PC-3 (cell line): ENCODE measurements at regions of chr10 and their contacts with region 1.

Region 1: DNA sequence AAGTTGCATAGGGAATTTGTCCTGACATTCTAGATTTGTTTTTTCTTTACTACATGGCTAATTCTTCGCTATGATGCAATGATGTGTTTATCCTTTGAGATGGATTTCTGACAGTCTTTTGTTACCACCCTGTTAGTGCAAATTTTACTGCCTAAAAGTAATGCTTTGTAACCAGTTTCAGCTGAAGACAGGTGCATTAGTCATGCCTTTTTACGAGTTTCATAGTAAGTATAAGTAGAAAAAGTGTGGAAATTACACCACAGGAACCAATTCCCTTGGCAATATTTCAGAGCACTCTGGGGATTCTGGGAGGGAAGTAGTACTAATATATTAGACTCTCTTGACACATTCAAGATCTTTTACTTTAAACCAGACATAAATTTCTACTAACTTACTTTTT is 257.8 kb upstream of the DKK1 start:
- DNase-seq: peak; percentile 98
- ATAC-seq: peak; percentile 82
- H3K4me3 ChIP-seq: no peak overlapping the region
- H3K27ac ChIP-seq: no peak overlapping the region
- H3K4me1 ChIP-seq: peaks cover 19% of the 10 kb centered on the region
- H3K27me3 ChIP-seq: no peaks in the 10 kb centered on the region
- CTCF ChIP-seq: no peak

Region 2: GRCh38 chr10:51574248-51575048 is 481.8 kb before region 1 on chr10:
- CTCF ChIA-PET with region 1: no interaction called
- POLR2A ChIA-PET with region 1: no interaction called
- intact Hi-C with region 1: no loop called
- DNase-seq: no peak
- ATAC-seq: no peak
- H3K4me3 ChIP-seq: no peak overlapping the region
- H3K27ac ChIP-seq: no peak overlapping the region
- H3K4me1 ChIP-seq: no peaks in the 10 kb centered on the region
- H3K27me3 ChIP-seq: no peaks in the 10 kb centered on the region
- CTCF ChIP-seq: no peak

Region 3: GRCh38 chr10:52027055-52027705 is 29.1 kb before region 1 on chr10:
- CTCF ChIA-PET with region 1: no interaction called
- POLR2A ChIA-PET with region 1: no interaction called
- intact Hi-C with region 1: loop called (anchors 2 kb)
- DNase-seq: no peak
- ATAC-seq: peak; percentile 55
- H3K4me3 ChIP-seq: peak overlapping the region; percentile 43
- H3K27ac ChIP-seq: no peak overlapping the region
- H3K4me1 ChIP-seq: peaks cover 7% of the 10 kb centered on the region; the same call in 1 of the 2 replicates
- H3K27me3 ChIP-seq: no peaks in the 10 kb centered on the region
- CTCF ChIP-seq: no peak

Region 4: GRCh38 chr10:52100011-52100547 is 43.8 kb after region 1 on chr10:
- CTCF ChIA-PET with region 1: no interaction called
- POLR2A ChIA-PET with region 1: no interaction called
- intact Hi-C with region 1: no loop called
- DNase-seq: no peak
- ATAC-seq: no peak
- H3K4me3 ChIP-seq: no peak overlapping the region
- H3K27ac ChIP-seq: no peak overlapping the region
- H3K4me1 ChIP-seq: no peaks in the 10 kb centered on the region
- H3K27me3 ChIP-seq: no peaks in the 10 kb centered on the region; the same call in 1 of the 2 replicates
- CTCF ChIP-seq: no peak

Region 5: GRCh38 chr10:52187521-52188258 is 131.4 kb after region 1 on chr10:
- CTCF ChIA-PET with region 1: no interaction called
- POLR2A ChIA-PET with region 1: no interaction called
- intact Hi-C with region 1: loop called (anchors 5 kb)
- DNase-seq: peak; percentile 48
- ATAC-seq: peak; percentile 95
- H3K4me3 ChIP-seq: no peak overlapping the region
- H3K27ac ChIP-seq: no peak overlapping the region
- H3K4me1 ChIP-seq: peaks cover 9% of the 10 kb centered on the region; the same call in 1 of the 2 replicates
- H3K27me3 ChIP-seq: no peaks in the 10 kb centered on the region
- CTCF ChIP-seq: no peak